ENCODE measurements at regions of chr11 and their contacts with region 1.

Region 1: GRCh38 chr11:15650105-15650938 is 535.6 kb downstream of the INSC start:
- DNase-seq: peak; percentile 91 to 99 (median 96)
- ATAC-seq: peak; percentile 98 to 100 (median 99)
- H3K4me3 ChIP-seq: peak overlapping the region; percentile 18 to 38 (median 30)
- H3K27ac ChIP-seq: peak overlapping the region; percentile 72 to 93 (median 80)
- H3K4me1 ChIP-seq: peaks cover 6% of the 10 kb centered on the region in 3 donors
- H3K27me3 ChIP-seq: no peaks in the 10 kb centered on the region
- CTCF ChIP-seq: peak; percentile 96 to 99 (median 98)

Region 2: GRCh38 chr11:16605894-16606783 is 955.8 kb after region 1 on chr11:
- intact Hi-C with region 1: loop called in 1 of 3 experiments (anchors 10 kb)
- DNase-seq: peak; percentile 81 to 97 (median 90)
- ATAC-seq: peak; percentile 68 to 85 (median 75)
- H3K4me3 ChIP-seq: peak overlapping the region; percentile 53 to 67 (median 67)
- H3K27ac ChIP-seq: peak overlapping the region; percentile 76 to 90 (median 87)
- H3K4me1 ChIP-seq: no peaks in the 10 kb centered on the region
- H3K27me3 ChIP-seq: no peaks in the 10 kb centered on the region
- CTCF ChIP-seq: peak; percentile 89 to 96 (median 94)

Measured in pancreas (tissue), 10 donors.